H1 (cell line): ENCODE measurements at regions of chr2 and their contacts with region 1.

Region 1: GRCh38 chr2:25354116-25354515 is 12.4 kb upstream of the DNMT3A start:
- DNase-seq: no peak
- H3K4me3 ChIP-seq: no peak overlapping the region
- H3K27ac ChIP-seq: no peak overlapping the region
- H3K4me1 ChIP-seq: peaks cover 0 to 6% (median 5%) of the 10 kb centered on the region in 4 experiments; a peak in 6 of 7 replicates
- H3K27me3 ChIP-seq: peaks cover 0 to 8% (median 3%) of the 10 kb centered on the region in 4 experiments; a peak in 2 of 7 replicates
- CTCF ChIP-seq: no peak
- EP300 ChIP-seq: no peak
- POLR2A ChIP-seq: no peak
- RAD21 ChIP-seq: no peak

Region 2: DNA sequence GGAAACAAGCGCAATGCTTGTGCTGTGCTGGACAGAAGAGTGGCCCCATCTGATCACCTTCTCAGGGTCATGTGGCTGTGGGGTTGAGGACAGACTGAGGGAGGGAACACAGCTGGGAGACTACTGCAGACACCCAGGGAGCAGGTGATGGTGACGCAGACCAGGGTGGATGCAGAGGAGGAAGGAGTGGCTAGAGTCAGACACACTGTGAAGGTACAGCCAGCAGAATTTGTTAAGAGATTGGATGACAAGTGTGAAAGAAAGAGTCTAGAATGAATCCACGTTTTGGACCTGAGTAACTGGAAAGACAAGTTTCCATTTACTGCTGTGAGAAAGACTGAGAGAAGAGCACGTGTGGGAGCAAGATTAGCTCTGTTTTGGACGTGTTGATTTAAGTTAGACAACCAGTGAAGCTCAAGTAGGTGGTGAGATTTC is 169.8 kb before region 1 on chr2:
- CTCF ChIA-PET with region 1: no interaction called
- POLR2A ChIA-PET with region 1: no interaction called
- DNase-seq: no peak
- H3K4me3 ChIP-seq: no peak overlapping the region
- H3K27ac ChIP-seq: no peak overlapping the region
- H3K4me1 ChIP-seq: no peaks in the 10 kb centered on the region
- H3K27me3 ChIP-seq: no peaks in the 10 kb centered on the region
- CTCF ChIP-seq: no peak
- EP300 ChIP-seq: no peak
- POLR2A ChIP-seq: no peak
- RAD21 ChIP-seq: no peak

Region 3: GRCh38 chr2:25342372-25343186 is 11.5 kb before region 1 on chr2:
- CTCF ChIA-PET with region 1: interaction called, 10 read pairs
- POLR2A ChIA-PET with region 1: interaction called, 3 read pairs
- DNase-seq: peak; percentile 77 to 93
- H3K4me3 ChIP-seq: peak overlapping the region; percentile 37 to 64 (median 48); a peak in 7 of 8 replicates
- H3K27ac ChIP-seq: no peak overlapping the region
- H3K4me1 ChIP-seq: peaks cover 0 to 20% (median 10%) of the 10 kb centered on the region in 4 experiments; a peak in 5 of 7 replicates
- H3K27me3 ChIP-seq: peaks cover 0 to 18% (median 11%) of the 10 kb centered on the region in 4 experiments; a peak in 6 of 7 replicates
- CTCF ChIP-seq: peak in 2 of 3 experiments; percentile 95 to 96; a peak in 3 of 4 replicates
- EP300 ChIP-seq: peak in 1 of 2 experiments; percentile 15; a peak in 2 of 3 replicates
- POLR2A ChIP-seq: no peak
- RAD21 ChIP-seq: peak; percentile 80 to 86